Activated CD8-positive, alpha-beta memory T cell treated with anti-CD3 and anti-CD28 coated beads, Interleukin-2, amount 10 ng/mL, durations not matched to agents 7 days and 5 days (primary cell): ENCODE measurements at regions of chr18 and their contacts with region 1.

Region 1: DNA sequence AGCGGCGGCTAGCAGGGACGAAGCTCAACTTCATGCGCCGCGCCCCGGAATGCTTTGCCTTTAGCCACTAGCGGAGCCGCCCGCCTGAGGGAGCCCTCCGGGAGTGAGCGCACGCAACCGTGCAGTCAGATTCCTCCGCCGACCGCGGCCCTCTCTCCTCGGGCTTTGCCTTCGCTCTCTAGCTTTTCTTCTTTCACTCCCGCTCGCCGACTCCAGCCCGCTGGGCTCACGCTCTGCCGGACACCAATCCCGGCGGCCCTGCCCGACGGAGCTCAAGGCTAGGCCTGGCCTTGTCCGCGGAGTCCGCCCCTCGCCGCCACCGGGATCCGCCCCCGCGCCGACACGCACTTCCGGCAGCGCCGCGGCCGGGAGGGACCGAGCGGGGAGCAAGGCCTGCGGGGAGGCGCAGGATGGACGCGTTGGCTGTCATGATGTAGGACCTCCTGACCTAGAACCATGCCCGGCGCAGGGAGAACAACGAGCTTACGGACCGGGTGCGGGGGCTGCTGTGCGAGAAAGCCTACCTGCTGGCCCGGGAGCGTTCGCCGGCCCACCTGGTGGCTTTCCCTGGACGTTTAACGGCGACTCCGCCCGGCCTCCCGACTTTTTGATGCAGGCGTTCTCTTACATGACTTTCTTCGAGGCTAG is 40.8 kb upstream of the AKAIN1 start:
- DNase-seq: peak; percentile 88
- ATAC-seq: peak; percentile 94
- H3K4me3 Mint-ChIP-seq: peak overlapping the region; percentile 90
- H3K27ac Mint-ChIP-seq: peak overlapping the region; percentile 96
- H3K4me1 Mint-ChIP-seq: peaks cover 38% of the 10 kb centered on the region
- H3K27me3 Mint-ChIP-seq: no peaks in the 10 kb centered on the region

Region 2: DNA sequence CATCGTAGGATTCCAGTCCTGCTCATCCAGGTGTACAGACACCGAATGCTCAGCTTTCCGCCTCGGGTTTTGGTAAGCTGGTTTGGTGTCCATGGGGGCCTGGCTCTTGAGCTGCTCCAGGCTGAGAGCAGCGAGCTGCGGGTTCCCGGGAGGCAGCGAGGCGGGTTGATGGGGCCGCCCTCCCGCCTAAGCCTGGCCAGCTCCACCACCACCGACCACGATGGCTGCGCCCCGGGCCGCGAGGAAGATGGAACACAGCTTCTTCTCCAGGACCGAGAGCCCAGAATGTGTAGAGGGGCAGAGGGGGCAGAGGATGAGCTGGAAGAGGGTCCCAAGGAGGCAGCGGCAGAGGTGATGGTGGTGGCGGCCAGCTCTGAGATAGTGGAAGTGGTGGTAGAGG is 104.9 kb before region 1 on chr18:
- CTCF ChIA-PET with region 1: no interaction called
- DNase-seq: no peak
- ATAC-seq: no peak
- H3K4me3 Mint-ChIP-seq: no peak overlapping the region
- H3K27ac Mint-ChIP-seq: no peak overlapping the region
- H3K4me1 Mint-ChIP-seq: no peaks in the 10 kb centered on the region
- H3K27me3 Mint-ChIP-seq: no peaks in the 10 kb centered on the region

Region 3: GRCh38 chr18:5294457-5295230 is 56.8 kb after region 1 on chr18:
- CTCF ChIA-PET with region 1: interaction called, 17 read pairs
- DNase-seq: peak; percentile 74
- ATAC-seq: peak; percentile 12
- H3K4me3 Mint-ChIP-seq: peak overlapping the region; percentile 81
- H3K27ac Mint-ChIP-seq: peak overlapping the region; percentile 89
- H3K4me1 Mint-ChIP-seq: peaks cover 16% of the 10 kb centered on the region
- H3K27me3 Mint-ChIP-seq: peaks cover 10% of the 10 kb centered on the region